HCT116 (cell line): ENCODE measurements at regions of chr4 and their contacts with region 1.

Region 1: DNA sequence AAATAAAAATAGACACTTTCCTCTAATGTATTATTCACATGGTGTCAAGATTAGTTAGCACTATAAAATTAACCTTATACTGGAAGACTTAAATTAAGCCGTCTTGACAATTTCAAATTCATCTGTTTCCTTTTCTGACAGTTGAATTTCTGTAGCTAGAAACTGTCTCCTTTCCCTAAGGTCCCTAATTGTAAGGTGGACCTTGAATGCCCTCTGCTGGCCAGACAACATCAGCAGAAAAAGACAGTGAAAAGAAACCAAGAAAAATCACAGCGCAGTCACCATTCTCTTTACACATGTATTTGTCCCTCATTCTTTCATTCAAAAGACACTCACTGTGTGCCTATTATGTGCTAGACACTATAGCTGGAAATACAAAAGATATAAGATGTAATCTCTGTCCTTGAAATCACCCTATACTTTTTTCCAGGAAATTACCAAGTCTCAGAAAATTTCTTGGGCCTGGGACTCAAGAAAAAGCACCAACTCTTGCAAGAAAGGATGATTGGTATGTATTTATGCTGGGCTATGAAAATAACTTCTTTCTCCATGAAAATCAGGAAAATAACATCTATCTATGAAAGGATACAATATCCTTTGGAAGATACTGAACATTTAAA is 32.7 kb upstream of the AMBN start:
- DNase-seq: peak; percentile 35
- ATAC-seq: peak; percentile 75
- H3K4me3 ChIP-seq: no peak overlapping the region
- H3K27ac ChIP-seq: no peak overlapping the region
- H3K4me1 ChIP-seq: no peaks in the 10 kb centered on the region
- H3K27me3 ChIP-seq: no peaks in the 10 kb centered on the region
- CTCF ChIP-seq: peak; percentile 60 to 93 (median 80)
- POLR2A ChIP-seq: no peak
- RAD21 ChIP-seq: peak; percentile 84

Region 2: DNA sequence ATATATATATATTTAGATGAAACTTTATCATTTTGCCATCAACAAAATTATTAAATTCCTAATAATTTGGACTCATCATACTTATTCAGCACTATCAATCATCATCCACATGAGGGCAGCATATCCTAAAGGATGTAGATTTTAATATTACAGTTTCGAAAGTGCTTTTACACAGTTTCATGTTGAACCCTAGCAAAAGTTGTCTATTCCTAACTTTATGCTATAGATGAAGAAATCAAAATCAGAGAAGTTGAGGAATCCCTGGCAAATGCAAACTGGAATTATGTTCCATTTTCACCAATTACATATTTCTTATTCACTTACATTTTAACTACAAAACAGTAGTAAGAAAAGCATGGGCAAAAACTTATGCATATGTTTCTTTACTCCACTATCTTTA is 869.7 kb before region 1 on chr4:
- CTCF ChIA-PET with region 1: no interaction called
- POLR2A ChIA-PET with region 1: no interaction called
- RAD21 ChIA-PET with region 1: no interaction called
- intact Hi-C with region 1: loop called (anchors 1 kb)
- DNase-seq: peak; percentile 6
- ATAC-seq: peak; percentile 63
- H3K4me3 ChIP-seq: no peak overlapping the region
- H3K27ac ChIP-seq: no peak overlapping the region
- H3K4me1 ChIP-seq: no peaks in the 10 kb centered on the region
- H3K27me3 ChIP-seq: no peaks in the 10 kb centered on the region
- CTCF ChIP-seq: peak; percentile 41 to 54 (median 50); a peak in 5 of 6 replicates
- POLR2A ChIP-seq: no peak
- RAD21 ChIP-seq: peak; percentile 76

Region 3: DNA sequence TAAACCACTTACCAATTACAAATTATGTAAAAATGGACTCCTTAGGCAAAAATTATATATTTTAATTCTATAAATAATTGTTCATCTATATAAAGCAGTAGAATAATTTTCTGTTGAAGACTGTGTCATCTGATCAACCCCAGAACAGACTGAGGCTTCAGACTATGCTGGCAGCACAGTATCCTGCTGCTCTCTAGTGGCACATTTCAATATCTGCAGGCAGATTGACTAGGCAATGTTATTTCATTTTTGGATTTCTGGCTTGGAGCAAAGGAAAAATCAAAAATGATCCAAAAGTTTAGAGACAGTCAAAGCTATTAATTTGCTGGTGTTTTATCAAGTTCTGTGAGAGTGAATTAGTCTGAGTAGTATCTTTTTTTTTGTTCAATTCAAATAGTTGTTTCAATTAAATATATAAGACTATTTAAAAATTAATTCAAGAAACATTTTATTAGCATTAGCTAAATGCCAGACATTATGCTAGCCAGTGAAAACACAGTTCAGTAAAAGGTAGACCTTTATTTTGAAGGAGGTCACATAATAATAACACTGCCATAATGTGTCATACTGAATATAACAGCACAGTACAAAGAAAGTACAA is 678.0 kb before region 1 on chr4:
- CTCF ChIA-PET with region 1: interaction called, 5 read pairs
- POLR2A ChIA-PET with region 1: no interaction called
- RAD21 ChIA-PET with region 1: no interaction called
- intact Hi-C with region 1: loop called (anchors 5 kb)
- DNase-seq: peak; percentile 22
- ATAC-seq: peak; percentile 78
- H3K4me3 ChIP-seq: no peak overlapping the region
- H3K27ac ChIP-seq: no peak overlapping the region
- H3K4me1 ChIP-seq: no peaks in the 10 kb centered on the region
- H3K27me3 ChIP-seq: no peaks in the 10 kb centered on the region
- CTCF ChIP-seq: peak; percentile 67 to 72 (median 70); a peak in 5 of 6 replicates
- POLR2A ChIP-seq: no peak
- RAD21 ChIP-seq: peak; percentile 86

Region 4: GRCh38 chr4:69896530-69897116 is 662.7 kb before region 1 on chr4:
- CTCF ChIA-PET with region 1: interaction called, 7 read pairs
- POLR2A ChIA-PET with region 1: no interaction called
- RAD21 ChIA-PET with region 1: no interaction called
- intact Hi-C with region 1: loop called (anchors 1 kb)
- DNase-seq: peak; percentile 7
- ATAC-seq: peak; percentile 36; the same call in 1 of the 2 replicates
- H3K4me3 ChIP-seq: no peak overlapping the region
- H3K27ac ChIP-seq: no peak overlapping the region
- H3K4me1 ChIP-seq: no peaks in the 10 kb centered on the region
- H3K27me3 ChIP-seq: no peaks in the 10 kb centered on the region
- CTCF ChIP-seq: peak; percentile 47 to 54 (median 51); a peak in 5 of 6 replicates
- POLR2A ChIP-seq: no peak
- RAD21 ChIP-seq: peak; percentile 61

Region 5: GRCh38 chr4:70183168-70183939 is 376.0 kb before region 1 on chr4:
- CTCF ChIA-PET with region 1: interaction called, 9 read pairs
- POLR2A ChIA-PET with region 1: no interaction called
- RAD21 ChIA-PET with region 1: no interaction called
- intact Hi-C with region 1: loop called (anchors 5 kb)
- DNase-seq: peak; percentile 65
- ATAC-seq: peak; percentile 93
- H3K4me3 ChIP-seq: no peak overlapping the region
- H3K27ac ChIP-seq: no peak overlapping the region
- H3K4me1 ChIP-seq: no peaks in the 10 kb centered on the region
- H3K27me3 ChIP-seq: no peaks in the 10 kb centered on the region
- CTCF ChIP-seq: peak; percentile 78 to 88 (median 87)
- POLR2A ChIP-seq: no peak
- RAD21 ChIP-seq: peak; percentile 76

Region 6: GRCh38 chr4:70315928-70316327 is 243.4 kb before region 1 on chr4:
- CTCF ChIA-PET with region 1: no interaction called
- POLR2A ChIA-PET with region 1: no interaction called
- RAD21 ChIA-PET with region 1: no interaction called
- intact Hi-C with region 1: loop called (anchors 10 kb)
- DNase-seq: peak; percentile 0
- ATAC-seq: no peak
- H3K4me3 ChIP-seq: no peak overlapping the region
- H3K27ac ChIP-seq: no peak overlapping the region
- H3K4me1 ChIP-seq: no peaks in the 10 kb centered on the region
- H3K27me3 ChIP-seq: no peaks in the 10 kb centered on the region
- CTCF ChIP-seq: 0 out of 6 replicates have a peak, but pooled peaks of 1 of the 3 experiments have one; percentile 8
- POLR2A ChIP-seq: no peak
- RAD21 ChIP-seq: peak; percentile 28; the same call in 1 of the 2 replicates

Region 7: DNA sequence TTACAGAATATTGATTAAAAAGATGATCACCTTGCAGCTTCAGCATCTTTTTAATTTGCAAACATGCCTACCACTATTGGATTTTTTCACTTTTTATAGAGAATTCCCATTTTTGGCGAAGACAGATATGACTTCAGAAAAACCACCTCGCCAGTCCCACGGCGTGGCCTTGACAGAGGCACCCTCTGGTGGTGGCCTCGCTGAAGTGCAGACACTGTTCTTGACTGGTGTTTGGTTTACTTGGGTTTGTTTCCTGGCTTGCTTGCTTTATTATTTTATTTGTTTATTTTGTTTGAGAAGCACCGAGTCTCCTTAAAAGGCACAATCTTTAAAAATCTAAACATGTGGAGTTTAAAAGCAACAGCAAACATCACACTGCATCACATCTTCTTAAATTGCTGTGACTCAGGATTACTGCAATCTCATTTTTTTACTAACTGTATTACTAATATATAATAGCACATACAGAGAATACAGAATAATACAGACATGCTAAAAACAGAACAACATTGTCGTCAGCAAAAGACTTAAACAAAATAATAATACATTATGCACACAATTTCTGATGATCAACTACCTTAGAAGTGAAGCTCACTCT is 54.1 kb before region 1 on chr4:
- CTCF ChIA-PET with region 1: interaction called, 7 read pairs
- POLR2A ChIA-PET with region 1: no interaction called
- RAD21 ChIA-PET with region 1: no interaction called
- intact Hi-C with region 1: loop called (anchors 2 kb)
- DNase-seq: peak; percentile 42
- ATAC-seq: peak; percentile 93
- H3K4me3 ChIP-seq: no peak overlapping the region
- H3K27ac ChIP-seq: no peak overlapping the region
- H3K4me1 ChIP-seq: no peaks in the 10 kb centered on the region
- H3K27me3 ChIP-seq: no peaks in the 10 kb centered on the region
- CTCF ChIP-seq: peak; percentile 63 to 97 (median 97)
- POLR2A ChIP-seq: no peak
- RAD21 ChIP-seq: peak; percentile 87

Region 8: DNA sequence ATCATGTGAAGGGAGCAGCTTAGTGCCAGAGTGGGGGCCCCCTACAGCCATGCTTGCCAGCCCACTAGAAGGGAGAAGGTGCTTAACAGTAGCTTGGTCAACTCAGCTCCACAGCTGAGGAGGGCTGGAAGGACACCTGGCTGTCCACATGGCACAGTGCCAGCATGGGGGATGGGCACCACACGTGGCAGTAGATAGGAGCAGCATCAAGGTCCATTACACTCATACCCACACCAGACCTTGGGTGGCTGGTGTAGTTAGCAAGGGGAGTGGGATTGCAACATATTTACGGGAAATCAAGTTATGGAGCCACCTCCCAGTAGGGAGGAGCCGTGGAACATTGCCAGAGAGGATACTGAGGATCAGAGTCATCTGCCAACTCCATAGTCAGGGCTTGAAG is 741.6 kb after region 1 on chr4:
- CTCF ChIA-PET with region 1: no interaction called
- POLR2A ChIA-PET with region 1: no interaction called
- RAD21 ChIA-PET with region 1: no interaction called
- intact Hi-C with region 1: no loop called
- DNase-seq: no peak
- ATAC-seq: no peak
- H3K4me3 ChIP-seq: no peak overlapping the region
- H3K27ac ChIP-seq: no peak overlapping the region
- H3K4me1 ChIP-seq: no peaks in the 10 kb centered on the region
- H3K27me3 ChIP-seq: peaks cover 8% of the 10 kb centered on the region; the same call in 1 of the 2 replicates
- CTCF ChIP-seq: no peak
- POLR2A ChIP-seq: no peak
- RAD21 ChIP-seq: no peak